ENCODE measurements at regions of chr6 and their contacts with region 1.

Region 1: GRCh38 chr6:49606696-49607390 is 29.8 kb downstream of the RHAG start:
- DNase-seq: peak in 1 of 2 donors; percentile 32
- ATAC-seq: peak in 6 of 8 donors; percentile 24 to 64 (median 52)
- H3K4me3 ChIP-seq: no peak overlapping the region
- H3K27ac ChIP-seq: no peak overlapping the region
- H3K4me1 ChIP-seq: no peaks in the 10 kb centered on the region
- H3K27me3 ChIP-seq: peaks cover 0 to 10% (median 0%) of the 10 kb centered on the region in 7 donors
- CTCF ChIP-seq: peak; percentile 71 to 87 (median 79)

Region 2: GRCh38 chr6:49468042-49468441 is 138.8 kb before region 1 on chr6:
- intact Hi-C with region 1: no loop called
- DNase-seq: no peak
- ATAC-seq: no peak
- H3K4me3 ChIP-seq: no peak overlapping the region
- H3K27ac ChIP-seq: no peak overlapping the region
- H3K4me1 ChIP-seq: peaks cover 3 to 10% (median 9%) of the 10 kb centered on the region in 9 donors
- H3K27me3 ChIP-seq: no peaks in the 10 kb centered on the region
- CTCF ChIP-seq: no peak

Region 3: DNA sequence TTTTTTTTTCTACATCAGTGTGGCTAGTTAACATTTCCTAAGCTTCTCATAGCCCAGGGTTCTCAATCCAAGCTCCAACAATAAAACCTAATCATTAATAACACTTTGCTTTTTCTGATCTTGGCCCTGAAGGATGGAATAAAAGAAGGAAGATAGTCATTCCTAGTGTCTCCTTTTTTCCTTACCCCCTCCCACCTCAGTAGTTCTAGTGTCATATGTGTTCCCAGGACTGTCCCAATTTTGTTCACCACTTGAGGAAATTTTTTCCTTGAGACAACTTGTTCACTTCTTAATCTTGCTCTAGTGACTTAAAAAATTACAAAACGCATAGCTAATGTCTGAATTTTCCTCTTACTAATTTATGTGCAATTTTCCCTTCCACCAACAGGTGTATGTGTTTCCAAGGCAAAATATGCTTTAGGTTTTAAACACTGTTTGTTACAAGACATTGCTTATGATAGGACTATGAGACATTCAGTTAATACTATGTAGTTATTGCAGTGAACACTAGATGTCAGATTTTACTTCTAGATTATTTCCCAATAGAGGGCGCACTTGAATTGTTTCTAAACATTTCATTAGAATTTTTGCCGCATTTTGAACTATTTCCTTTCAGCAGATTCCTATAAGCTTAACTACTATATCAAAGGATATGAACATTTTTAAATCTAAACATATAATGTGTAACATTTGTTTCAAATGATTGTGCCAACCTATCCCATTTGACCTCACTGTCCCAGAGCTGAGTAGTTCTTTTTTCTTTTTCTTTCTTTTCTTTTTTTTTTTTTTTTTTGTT is 74.9 kb before region 1 on chr6:
- intact Hi-C with region 1: loop called in 9 of 10 experiments (anchors 1 to 10 kb)
- DNase-seq: no peak
- ATAC-seq: peak in 5 of 8 donors; percentile 23 to 67 (median 47)
- H3K4me3 ChIP-seq: peak overlapping the region in 3 of 10 donors; percentile 21 to 27 (median 27)
- H3K27ac ChIP-seq: no peak overlapping the region
- H3K4me1 ChIP-seq: no peaks in the 10 kb centered on the region
- H3K27me3 ChIP-seq: peaks cover 0 to 10% (median 0%) of the 10 kb centered on the region in 7 donors
- CTCF ChIP-seq: peak; percentile 42 to 94 (median 78)